GM12878 (cell line): ENCODE measurements at regions of chr16 and their contacts with region 1.

Region 1: GRCh38 chr16:29700253-29700987 is 21.4 kb downstream of the QPRT start:
- DNase-seq: no peak
- ATAC-seq: peak; percentile 54
- H3K4me3 ChIP-seq: no peak overlapping the region
- H3K27ac ChIP-seq: no peak overlapping the region
- H3K4me1 ChIP-seq: peaks cover 13% of the 10 kb centered on the region
- H3K27me3 ChIP-seq: no peaks in the 10 kb centered on the region
- CTCF ChIP-seq: peak; percentile 69 to 76 (median 73)
- EP300 ChIP-seq: no peak
- POLR2A ChIP-seq: no peak
- RAD21 ChIP-seq: peak; percentile 87

Region 2: DNA sequence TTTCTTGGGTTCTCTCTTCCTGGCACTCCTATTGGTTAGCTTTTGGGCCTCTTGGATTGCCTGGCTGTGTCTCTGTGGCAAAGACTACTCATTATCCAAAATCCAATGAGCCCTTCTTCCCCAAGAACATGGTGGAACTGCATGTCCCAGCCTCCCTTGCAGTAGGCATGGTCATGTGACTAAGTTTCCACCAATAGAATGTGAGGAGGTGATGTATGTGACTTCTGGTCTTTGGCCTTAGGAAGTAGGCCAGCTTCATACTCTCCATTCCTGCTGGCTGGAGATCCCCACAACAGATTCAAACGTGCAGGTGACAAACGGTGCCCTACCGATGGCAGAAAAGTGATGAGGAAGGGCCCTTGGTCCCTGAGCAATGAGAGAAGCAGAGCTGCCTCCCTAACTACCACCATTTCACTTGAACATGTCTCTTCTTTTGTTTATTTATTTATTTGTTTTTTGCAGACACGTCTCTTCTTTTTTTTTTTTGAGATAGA is 54.7 kb before region 1 on chr16:
- CTCF ChIA-PET with region 1: interaction called, 27 read pairs
- POLR2A ChIA-PET with region 1: interaction called, 6 read pairs
- RAD21 ChIA-PET with region 1: interaction called, 6 read pairs
- SMC1A ChIA-PET with region 1: interaction called, 6 read pairs
- in situ Hi-C with region 1: no loop called
- intact Hi-C with region 1: no loop called
- DNase-seq: peak; percentile 83
- ATAC-seq: peak; percentile 77
- H3K4me3 ChIP-seq: no peak overlapping the region
- H3K27ac ChIP-seq: peak overlapping the region; percentile 90
- H3K4me1 ChIP-seq: peaks cover 45% of the 10 kb centered on the region
- H3K27me3 ChIP-seq: no peaks in the 10 kb centered on the region
- CTCF ChIP-seq: no peak
- EP300 ChIP-seq: no peak
- POLR2A ChIP-seq: peak; percentile 52
- RAD21 ChIP-seq: no peak

Region 3: DNA sequence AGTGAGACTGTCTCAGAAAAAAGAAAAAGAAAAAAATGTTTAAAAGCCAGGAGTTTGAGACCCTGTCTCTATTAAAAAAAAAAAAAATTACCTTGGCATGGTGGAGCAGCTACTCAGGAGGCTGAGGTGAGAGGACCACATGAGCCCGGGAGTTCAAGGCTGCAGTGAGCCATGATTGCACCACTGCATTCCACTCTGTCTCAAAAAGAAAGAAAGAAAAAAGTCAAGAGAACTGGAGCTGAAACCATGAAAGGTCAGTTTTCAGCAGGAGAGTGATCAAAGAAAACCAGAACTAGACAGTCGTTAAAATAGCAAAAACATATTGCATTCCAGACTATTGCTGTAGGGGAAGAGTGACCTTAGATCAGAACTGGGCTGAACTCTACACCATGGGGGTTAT is 12.7 kb before region 1 on chr16:
- CTCF ChIA-PET with region 1: interaction called, 23 read pairs
- POLR2A ChIA-PET with region 1: interaction called, 10 read pairs
- RAD21 ChIA-PET with region 1: interaction called, 3 read pairs
- SMC1A ChIA-PET with region 1: interaction called, 10 read pairs
- in situ Hi-C with region 1: no loop called
- intact Hi-C with region 1: no loop called
- DNase-seq: no peak
- ATAC-seq: no peak
- H3K4me3 ChIP-seq: no peak overlapping the region
- H3K27ac ChIP-seq: 0 out of 2 replicates have a peak overlapping the region, but pooled peaks have one; percentile 18
- H3K4me1 ChIP-seq: peaks cover 23% of the 10 kb centered on the region
- H3K27me3 ChIP-seq: no peaks in the 10 kb centered on the region
- CTCF ChIP-seq: no peak
- EP300 ChIP-seq: no peak
- POLR2A ChIP-seq: no peak
- RAD21 ChIP-seq: no peak

Region 4: GRCh38 chr16:29720699-29721098 is 20.3 kb after region 1 on chr16:
- CTCF ChIA-PET with region 1: interaction called, 8 read pairs
- POLR2A ChIA-PET with region 1: interaction called, 5 read pairs
- RAD21 ChIA-PET with region 1: interaction called, 4 read pairs
- SMC1A ChIA-PET with region 1: interaction called, 14 read pairs
- in situ Hi-C with region 1: no loop called
- intact Hi-C with region 1: loop called (anchors 1 kb)
- DNase-seq: no peak
- ATAC-seq: no peak
- H3K4me3 ChIP-seq: no peak overlapping the region
- H3K27ac ChIP-seq: no peak overlapping the region
- H3K4me1 ChIP-seq: no peaks in the 10 kb centered on the region; the same call in 1 of the 2 replicates
- H3K27me3 ChIP-seq: no peaks in the 10 kb centered on the region
- CTCF ChIP-seq: no peak
- EP300 ChIP-seq: no peak
- POLR2A ChIP-seq: no peak
- RAD21 ChIP-seq: no peak

Region 5: GRCh38 chr16:29790183-29790952 is 89.9 kb after region 1 on chr16 and contains the start of gene KIF22:
- CTCF ChIA-PET with region 1: interaction called, 6 read pairs
- POLR2A ChIA-PET with region 1: no interaction called
- RAD21 ChIA-PET with region 1: interaction called, 3 read pairs
- SMC1A ChIA-PET with region 1: interaction called, 6 read pairs
- in situ Hi-C with region 1: no loop called
- intact Hi-C with region 1: loop called (anchors 5 kb)
- DNase-seq: peak; percentile 97
- ATAC-seq: peak; percentile 98
- H3K4me3 ChIP-seq: peak within 1 kb of the TSS; percentile 93
- H3K27ac ChIP-seq: peak within 1 kb of the TSS; percentile 95
- H3K4me1 ChIP-seq: peaks cover 9% of the 10 kb centered on the region; the same call in 1 of the 2 replicates
- H3K27me3 ChIP-seq: no peaks in the 10 kb centered on the region
- CTCF ChIP-seq: peak; percentile 79 to 92 (median 89)
- EP300 ChIP-seq: no peak
- POLR2A ChIP-seq: peak; percentile 97
- RAD21 ChIP-seq: peak; percentile 61
- polyA plus RNA-seq, gene KIF22: 7.6 to 16.9 TPM

Region 6: GRCh38 chr16:29848420-29849297 is 148.2 kb after region 1 on chr16:
- CTCF ChIA-PET with region 1: interaction called, 23 read pairs
- POLR2A ChIA-PET with region 1: interaction called, 3 read pairs
- RAD21 ChIA-PET with region 1: interaction called, 9 read pairs
- SMC1A ChIA-PET with region 1: interaction called, 11 read pairs
- in situ Hi-C with region 1: no loop called
- intact Hi-C with region 1: loop called (anchors 1 kb)
- DNase-seq: no peak
- ATAC-seq: peak; percentile 99
- H3K4me3 ChIP-seq: no peak overlapping the region
- H3K27ac ChIP-seq: no peak overlapping the region
- H3K4me1 ChIP-seq: no peaks in the 10 kb centered on the region
- H3K27me3 ChIP-seq: no peaks in the 10 kb centered on the region
- CTCF ChIP-seq: peak; percentile 88 to 98 (median 90)
- EP300 ChIP-seq: no peak
- POLR2A ChIP-seq: peak; percentile 51
- RAD21 ChIP-seq: peak; percentile 76